ENCODE measurements at regions of chr3 and their contacts with region 1.

Region 1: GRCh38 chr3:150521463-150521862 is 24.8 kb downstream of the SERP1 start:
- DNase-seq: no peak
- H3K4me3 ChIP-seq: no peak overlapping the region
- H3K4me3 Mint-ChIP-seq: peak overlapping the region; percentile 18
- H3K27ac Mint-ChIP-seq: no peak overlapping the region
- H3K4me1 ChIP-seq: peaks cover 3% of the 10 kb centered on the region; the same call in 1 of the 2 replicates
- H3K4me1 Mint-ChIP-seq: no peaks in the 10 kb centered on the region
- H3K27me3 ChIP-seq: no peaks in the 10 kb centered on the region
- H3K27me3 Mint-ChIP-seq: peaks cover 7% of the 10 kb centered on the region
- CTCF ChIP-seq: no peak

Region 2: GRCh38 chr3:150020527-150020926 is 500.9 kb before region 1 on chr3:
- CTCF ChIA-PET with region 1: no interaction called
- POLR2A ChIA-PET with region 1: interaction called, 20 read pairs
- intact Hi-C with region 1: no loop called
- DNase-seq: no peak
- H3K4me3 ChIP-seq: no peak overlapping the region
- H3K4me3 Mint-ChIP-seq: no peak overlapping the region
- H3K27ac Mint-ChIP-seq: no peak overlapping the region
- H3K4me1 ChIP-seq: no peaks in the 10 kb centered on the region
- H3K4me1 Mint-ChIP-seq: no peaks in the 10 kb centered on the region
- H3K27me3 ChIP-seq: no peaks in the 10 kb centered on the region
- H3K27me3 Mint-ChIP-seq: peaks cover 3% of the 10 kb centered on the region
- CTCF ChIP-seq: no peak

Region 3: DNA sequence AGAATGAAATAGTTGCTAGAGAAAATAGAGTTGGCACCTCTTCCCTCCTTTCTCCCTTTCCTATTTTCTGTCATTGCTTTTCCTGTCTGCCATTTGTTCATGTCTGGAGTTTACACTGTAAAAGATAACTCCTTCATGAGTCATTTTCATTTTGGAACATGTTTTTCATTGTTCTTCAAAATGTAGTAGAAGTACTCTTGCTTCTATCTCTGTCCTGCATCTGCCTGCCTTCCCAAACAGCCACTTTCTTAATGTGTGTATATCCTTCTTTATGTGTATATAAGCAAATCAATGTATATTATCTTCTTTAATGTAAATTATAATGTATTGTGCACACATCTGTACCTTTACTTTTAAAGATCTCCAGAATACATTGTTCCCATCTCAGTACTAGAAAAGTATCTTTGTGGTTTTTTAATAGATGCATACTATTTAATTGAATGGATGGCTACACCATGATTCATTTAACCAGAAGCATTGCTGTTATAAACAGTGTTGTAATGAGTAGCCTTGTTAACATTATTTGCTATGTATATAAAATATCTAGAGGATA is 72.2 kb before region 1 on chr3:
- CTCF ChIA-PET with region 1: no interaction called
- POLR2A ChIA-PET with region 1: no interaction called
- intact Hi-C with region 1: no loop called
- DNase-seq: no peak
- H3K4me3 ChIP-seq: no peak overlapping the region
- H3K4me3 Mint-ChIP-seq: no peak overlapping the region
- H3K27ac Mint-ChIP-seq: no peak overlapping the region
- H3K4me1 ChIP-seq: peaks cover 48% of the 10 kb centered on the region
- H3K4me1 Mint-ChIP-seq: peaks cover 28% of the 10 kb centered on the region
- H3K27me3 ChIP-seq: no peaks in the 10 kb centered on the region
- H3K27me3 Mint-ChIP-seq: no peaks in the 10 kb centered on the region
- CTCF ChIP-seq: no peak

Measured in Caco-2 (cell line).